ENCODE measurements at regions of chr9 and their contacts with region 1.

Region 1: GRCh38 chr9:113511856-113512761 is 48.6 kb downstream of the RGS3 start:
- DNase-seq: peak; percentile 81
- H3K4me3 ChIP-seq: peak overlapping the region in 1 of 8 donors; percentile 5
- H3K27ac ChIP-seq: peak overlapping the region in 7 of 8 donors; percentile 47 to 76 (median 69)
- H3K4me1 ChIP-seq: peaks cover 31 to 100% (median 82%) of the 10 kb centered on the region in 6 donors
- H3K27me3 ChIP-seq: no peaks in the 10 kb centered on the region
- CTCF ChIP-seq: no peak
- POLR2A ChIP-seq: no peak

Region 2: DNA sequence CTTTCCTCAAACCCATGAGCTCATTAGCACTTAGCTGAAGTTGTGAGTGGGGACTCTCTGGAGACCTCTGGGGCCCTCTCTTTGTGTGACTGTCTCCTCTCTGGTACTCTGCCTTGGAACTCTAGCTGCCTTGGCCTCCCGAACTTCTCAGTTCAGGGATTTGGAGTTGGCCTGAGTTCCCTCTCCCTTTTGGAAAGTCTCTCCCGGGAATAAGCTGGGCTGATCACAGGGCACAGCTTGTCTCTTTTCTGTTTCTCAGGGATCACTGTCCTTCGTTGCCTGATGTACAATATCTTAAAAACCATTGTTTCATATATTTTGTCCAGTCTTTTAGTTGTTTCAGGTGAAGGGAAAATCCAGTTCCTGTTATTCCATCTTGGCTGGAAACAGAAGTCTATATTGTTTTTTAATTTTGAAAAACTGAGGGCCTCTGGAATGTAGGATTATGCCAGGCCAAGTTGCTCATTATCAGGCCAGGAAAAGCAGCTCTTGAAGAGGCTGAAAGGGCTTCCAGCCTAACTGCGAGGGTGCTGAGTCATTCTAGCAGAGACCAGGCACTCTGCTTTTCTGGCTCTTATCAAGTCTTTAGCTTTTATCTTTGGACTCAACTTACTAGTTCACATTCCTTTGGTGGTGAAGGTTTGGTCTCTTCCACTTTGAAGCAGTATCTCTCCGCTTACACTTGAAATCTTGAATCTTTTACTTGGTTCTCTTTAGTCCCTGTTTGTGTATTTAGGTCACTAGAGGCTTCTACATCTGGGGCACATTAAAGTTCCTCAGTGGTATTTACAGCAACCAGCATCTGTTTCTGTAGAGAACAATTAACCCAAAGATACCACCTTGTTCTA is 57.0 kb before region 1 on chr9:
- intact Hi-C with region 1: loop called (anchors 10 kb)
- DNase-seq: no peak
- H3K4me3 ChIP-seq: no peak overlapping the region
- H3K27ac ChIP-seq: peak overlapping the region; percentile 35 to 83 (median 68)
- H3K4me1 ChIP-seq: peaks cover 0 to 31% (median 20%) of the 10 kb centered on the region in 6 donors
- H3K27me3 ChIP-seq: no peaks in the 10 kb centered on the region
- CTCF ChIP-seq: no peak
- POLR2A ChIP-seq: no peak

Region 3: GRCh38 chr9:113578882-113579282 is 66.8 kb after region 1 on chr9:
- intact Hi-C with region 1: loop called (anchors 10 kb)
- DNase-seq: peak; percentile 96
- H3K4me3 ChIP-seq: peak overlapping the region in 1 of 8 donors; percentile 69
- H3K27ac ChIP-seq: peak overlapping the region; percentile 77 to 96 (median 92)
- H3K4me1 ChIP-seq: peaks cover 61 to 100% (median 91%) of the 10 kb centered on the region in 6 donors
- H3K27me3 ChIP-seq: no peaks in the 10 kb centered on the region
- CTCF ChIP-seq: no peak
- POLR2A ChIP-seq: no peak

Measured in spleen (tissue), 13 donors.